AG04449 (cell line): ENCODE measurements at regions of chr3 and their contacts with region 1.

Region 1: DNA sequence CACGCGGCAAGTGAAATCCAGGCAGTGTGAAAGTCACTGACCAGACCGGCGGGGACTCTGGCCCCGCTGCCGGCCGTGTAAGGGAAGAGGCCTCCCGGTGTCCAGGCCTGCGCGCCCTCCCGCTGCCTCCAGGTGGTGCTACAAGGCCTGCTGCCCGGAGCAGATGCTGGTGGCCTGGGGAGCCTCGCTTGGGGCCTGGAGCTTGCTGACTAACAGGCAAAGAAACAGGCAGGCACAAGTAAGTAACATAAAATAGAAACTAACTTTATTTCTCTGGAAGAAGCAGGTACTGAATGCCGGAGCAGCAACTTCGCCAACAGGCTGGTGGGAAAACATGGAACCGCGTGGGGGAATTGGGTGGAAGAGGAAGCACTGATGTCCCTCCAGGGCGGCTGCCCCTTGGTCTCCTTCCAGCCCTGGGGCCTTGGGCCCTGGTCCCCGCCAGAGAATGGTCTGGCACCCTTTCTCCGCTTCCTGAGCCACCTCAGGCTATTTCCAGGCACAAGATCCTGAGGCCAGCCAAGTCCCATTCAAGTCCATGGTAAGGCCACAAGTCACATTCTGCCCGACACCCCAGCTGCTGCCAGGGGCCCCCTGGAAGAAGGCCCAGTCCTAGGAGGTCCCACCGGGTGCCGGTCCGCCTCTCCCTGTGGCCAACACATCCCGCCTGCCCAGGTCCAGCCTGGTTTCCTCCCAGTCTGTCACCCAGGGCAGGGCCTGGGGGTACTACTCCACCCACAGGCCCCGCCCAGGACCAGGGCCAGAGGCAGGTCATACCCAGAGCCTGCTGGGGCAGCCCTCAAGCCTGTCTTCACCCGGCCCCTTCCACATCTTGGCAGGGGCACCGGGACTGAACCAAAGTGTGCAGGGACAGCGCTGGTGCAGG is 45.0 kb downstream of the TNK2 start:
- DNase-seq: peak; percentile 40
- H3K4me3 ChIP-seq: no peak overlapping the region
- CTCF ChIP-seq: peak; percentile 99

Region 2: GRCh38 chr3:195886181-195887141 is 23.1 kb after region 1 on chr3:
- CTCF ChIA-PET with region 1: interaction called, 571 read pairs
- POLR2A ChIA-PET with region 1: no interaction called
- DNase-seq: no peak
- H3K4me3 ChIP-seq: no peak overlapping the region
- CTCF ChIP-seq: no peak